IMR-90 (cell line): ENCODE measurements at regions of chr5 and their contacts with region 1.

Region 1: DNA sequence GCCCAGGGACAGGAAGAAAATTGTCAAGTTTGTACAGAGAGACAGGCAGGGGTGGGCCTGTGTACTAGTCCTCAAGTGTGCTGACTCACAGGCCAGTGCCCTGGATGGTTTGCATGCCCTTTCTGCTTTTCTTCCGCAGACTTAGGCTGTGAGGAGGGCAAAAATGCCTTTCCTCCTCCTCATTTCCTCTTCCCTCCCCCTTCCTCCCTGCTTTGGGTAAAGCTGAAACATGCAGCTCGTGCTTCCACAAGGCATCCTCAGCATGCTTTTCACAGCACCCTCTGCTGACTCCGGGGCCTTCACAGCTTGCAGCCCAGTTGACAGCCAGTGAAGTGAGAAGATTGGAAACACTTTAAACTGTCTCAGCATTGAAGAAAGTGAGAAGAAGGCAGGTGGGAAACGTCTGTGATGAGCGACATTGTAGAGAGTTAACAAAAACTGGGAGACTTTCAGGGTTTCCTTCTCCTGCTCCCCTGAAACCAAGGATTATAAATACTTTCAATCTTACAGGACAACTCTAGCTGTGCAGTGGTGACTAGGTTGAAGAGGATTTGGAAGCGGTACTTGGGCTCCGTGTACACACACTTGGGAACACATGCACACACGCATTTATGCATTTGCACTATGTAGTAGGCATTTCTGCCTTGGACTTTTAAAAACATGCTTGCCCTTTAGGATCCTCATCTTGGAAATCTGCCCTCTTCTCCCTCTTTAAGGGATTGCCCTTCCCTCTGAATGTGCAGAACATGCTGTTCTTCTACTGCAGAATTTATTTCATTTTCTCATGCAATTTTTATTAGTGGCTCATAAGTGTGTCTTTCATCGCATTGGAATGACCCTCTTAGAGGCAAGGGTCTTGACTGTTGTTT is 138.8 kb downstream of the GRIA1 start:
- DNase-seq: peak; percentile 97
- ATAC-seq: peak; percentile 97
- H3K4me3 ChIP-seq: no peak overlapping the region
- H3K27ac ChIP-seq: peak overlapping the region; percentile 84
- H3K4me1 ChIP-seq: peaks cover 8% of the 10 kb centered on the region
- H3K27me3 ChIP-seq: no peaks in the 10 kb centered on the region
- CTCF ChIP-seq: peak; percentile 54
- POLR2A ChIP-seq: no peak
- RAD21 ChIP-seq: peak; percentile 60

Region 2: GRCh38 chr5:153515270-153515669 is 114.0 kb before region 1 on chr5:
- CTCF ChIA-PET with region 1: no interaction called
- POLR2A ChIA-PET with region 1: no interaction called
- dilution Hi-C with region 1: no loop called
- in situ Hi-C with region 1: no loop called
- intact Hi-C with region 1: loop called (anchors 5 kb)
- DNase-seq: peak; percentile 59
- ATAC-seq: peak; percentile 52
- H3K4me3 ChIP-seq: no peak overlapping the region
- H3K27ac ChIP-seq: no peak overlapping the region
- H3K4me1 ChIP-seq: peaks cover 2% of the 10 kb centered on the region; the same call in 1 of the 2 replicates
- H3K27me3 ChIP-seq: no peaks in the 10 kb centered on the region
- CTCF ChIP-seq: no peak
- POLR2A ChIP-seq: no peak
- RAD21 ChIP-seq: no peak

Region 3: GRCh38 chr5:153598099-153598498 is 31.2 kb before region 1 on chr5:
- CTCF ChIA-PET with region 1: no interaction called
- POLR2A ChIA-PET with region 1: no interaction called
- dilution Hi-C with region 1: no loop called
- in situ Hi-C with region 1: no loop called
- intact Hi-C with region 1: no loop called
- DNase-seq: no peak
- ATAC-seq: no peak
- H3K4me3 ChIP-seq: no peak overlapping the region
- H3K27ac ChIP-seq: no peak overlapping the region
- H3K4me1 ChIP-seq: no peaks in the 10 kb centered on the region
- H3K27me3 ChIP-seq: no peaks in the 10 kb centered on the region
- CTCF ChIP-seq: no peak
- POLR2A ChIP-seq: no peak
- RAD21 ChIP-seq: no peak

Region 4: DNA sequence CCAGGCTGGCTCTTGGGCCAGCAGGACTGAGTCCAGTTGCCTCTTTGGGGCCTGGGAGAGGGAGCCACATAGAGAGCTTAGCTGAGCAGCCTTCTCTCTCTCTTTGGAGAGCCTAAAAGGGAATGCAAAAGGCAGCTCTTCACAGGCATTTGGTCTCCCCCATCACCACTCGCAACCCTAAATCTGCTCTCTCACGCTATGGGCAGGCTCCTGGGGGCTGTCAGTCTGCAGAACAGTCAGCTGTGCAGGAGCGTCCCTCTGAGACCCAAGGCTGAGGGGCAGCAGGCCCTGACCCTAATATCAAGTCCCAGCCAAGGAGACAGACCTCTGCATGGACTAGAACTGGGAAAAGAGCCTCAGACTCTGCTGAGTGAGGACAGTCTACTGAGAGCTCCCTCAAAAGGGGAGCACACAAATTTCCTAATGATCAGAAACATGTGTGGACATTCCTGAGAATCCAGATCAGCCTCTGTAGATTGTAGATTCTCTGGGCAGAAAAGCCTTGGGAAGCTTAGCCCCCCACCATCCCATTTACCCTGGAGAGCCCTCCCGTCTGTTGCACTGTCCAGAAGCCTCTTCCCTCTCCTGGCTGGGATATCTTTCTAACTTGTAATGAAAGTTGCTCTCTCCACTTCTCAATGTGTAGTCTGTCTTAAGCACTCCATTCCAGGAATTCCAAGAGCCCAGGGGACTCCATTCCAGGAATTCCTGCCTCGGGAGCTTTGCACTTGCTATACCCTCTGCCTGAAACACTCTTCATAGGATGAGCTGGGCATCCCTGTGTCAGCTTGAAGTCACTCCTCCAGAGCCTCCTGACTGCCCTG is 330.1 kb after region 1 on chr5:
- CTCF ChIA-PET with region 1: no interaction called
- POLR2A ChIA-PET with region 1: no interaction called
- dilution Hi-C with region 1: no loop called
- in situ Hi-C with region 1: no loop called
- intact Hi-C with region 1: loop called (anchors 5 kb)
- DNase-seq: peak; percentile 45
- ATAC-seq: peak; percentile 88
- H3K4me3 ChIP-seq: no peak overlapping the region
- H3K27ac ChIP-seq: peak overlapping the region; percentile 67; the same call in 1 of the 2 replicates
- H3K4me1 ChIP-seq: peaks cover 14% of the 10 kb centered on the region
- H3K27me3 ChIP-seq: no peaks in the 10 kb centered on the region
- CTCF ChIP-seq: no peak
- POLR2A ChIP-seq: no peak
- RAD21 ChIP-seq: no peak

Region 5: DNA sequence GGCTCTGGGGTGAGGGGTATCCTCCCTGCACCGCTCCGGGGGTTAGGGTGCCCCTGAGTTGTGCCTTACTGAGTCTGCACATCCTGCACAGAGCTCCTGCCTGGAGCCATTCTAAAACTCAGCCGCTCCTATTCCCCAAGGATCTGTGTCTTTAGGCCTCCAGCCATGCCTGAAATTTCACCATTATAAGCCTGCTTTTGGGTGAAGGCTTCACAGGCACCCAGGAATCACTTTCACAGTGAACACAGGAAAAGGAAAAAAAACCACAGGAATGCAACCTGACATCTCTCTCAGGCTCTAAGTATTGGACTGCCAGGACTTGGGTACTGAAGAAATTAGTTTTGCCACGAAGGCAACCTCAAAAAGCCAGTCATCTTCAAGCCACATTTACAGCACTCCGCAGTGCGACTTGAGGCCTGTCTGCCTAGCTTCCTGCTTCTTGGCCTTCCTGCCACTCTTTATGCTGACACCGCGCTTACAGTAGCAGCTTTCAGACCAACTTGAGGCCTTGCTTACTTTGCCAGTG is 592.2 kb after region 1 on chr5:
- CTCF ChIA-PET with region 1: no interaction called
- POLR2A ChIA-PET with region 1: no interaction called
- dilution Hi-C with region 1: no loop called
- in situ Hi-C with region 1: no loop called
- intact Hi-C with region 1: no loop called
- DNase-seq: peak; percentile 89
- ATAC-seq: peak; percentile 69
- H3K4me3 ChIP-seq: no peak overlapping the region
- H3K27ac ChIP-seq: peak overlapping the region; percentile 82
- H3K4me1 ChIP-seq: peaks cover 15% of the 10 kb centered on the region
- H3K27me3 ChIP-seq: no peaks in the 10 kb centered on the region
- CTCF ChIP-seq: no peak
- POLR2A ChIP-seq: no peak
- RAD21 ChIP-seq: no peak